Sigmoid colon (tissue), 7 donors: ENCODE measurements at regions of chr7 and their contacts with region 1.

Region 1: GRCh38 chr7:20075992-20076820 is 141.0 kb downstream of the MACC1 start:
- DNase-seq: no peak
- H3K4me3 ChIP-seq: no peak overlapping the region
- H3K27ac ChIP-seq: peak overlapping the region in 3 of 4 donors; percentile 45 to 60 (median 56)
- H3K4me1 ChIP-seq: peaks cover 0 to 39% (median 27%) of the 10 kb centered on the region in 4 donors
- H3K27me3 ChIP-seq: no peaks in the 10 kb centered on the region
- CTCF ChIP-seq: no peak
- EP300 ChIP-seq: no peak
- POLR2A ChIP-seq: no peak

Region 2: DNA sequence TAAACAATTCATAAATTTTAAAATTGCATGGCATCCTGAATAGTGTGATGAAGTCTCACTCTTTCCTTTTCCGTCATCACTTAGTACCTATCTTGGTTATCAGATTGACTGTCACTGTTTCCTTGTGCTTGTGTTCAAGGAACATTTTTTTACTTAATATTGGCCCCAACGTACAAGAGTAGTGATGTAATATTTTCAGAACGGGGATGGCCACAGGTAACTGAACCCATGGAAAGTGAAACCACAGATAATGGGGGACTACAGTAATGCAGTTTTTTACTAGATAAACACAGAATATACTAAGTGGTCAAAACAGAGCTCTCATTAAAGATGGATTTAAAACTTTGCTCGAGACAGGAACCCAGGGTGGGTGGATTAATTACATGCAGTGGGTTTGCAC is 55.6 kb after region 1 on chr7:
- intact Hi-C with region 1: no loop called
- DNase-seq: no peak
- H3K4me3 ChIP-seq: no peak overlapping the region
- H3K27ac ChIP-seq: no peak overlapping the region
- H3K4me1 ChIP-seq: peaks cover 0 to 16% (median 7%) of the 10 kb centered on the region in 4 donors
- H3K27me3 ChIP-seq: no peaks in the 10 kb centered on the region
- CTCF ChIP-seq: no peak
- EP300 ChIP-seq: no peak
- POLR2A ChIP-seq: no peak

Region 3: DNA sequence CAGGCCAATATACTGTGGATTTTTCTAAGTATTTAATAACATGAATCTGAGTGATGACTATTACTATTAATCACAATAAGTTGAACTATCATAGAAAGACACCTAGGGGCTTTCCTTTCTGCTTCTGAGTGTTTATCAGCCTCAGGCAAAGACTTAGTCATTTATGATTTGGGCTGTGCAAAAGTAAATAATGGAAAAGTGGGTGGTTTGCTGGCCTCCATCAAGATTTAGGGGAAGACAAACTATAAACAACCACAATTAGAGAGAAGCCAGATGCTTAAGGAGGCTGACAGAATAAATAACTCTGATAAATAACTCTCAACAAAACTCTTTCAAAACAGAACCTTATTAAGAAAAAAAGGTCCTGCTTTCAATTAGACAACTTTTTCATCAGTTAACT is 76.3 kb after region 1 on chr7:
- intact Hi-C with region 1: loop called (anchors 5 kb)
- DNase-seq: no peak
- H3K4me3 ChIP-seq: no peak overlapping the region
- H3K27ac ChIP-seq: peak overlapping the region in 3 of 4 donors; percentile 67 to 73 (median 72)
- H3K4me1 ChIP-seq: peaks cover 0 to 37% (median 34%) of the 10 kb centered on the region in 4 donors
- H3K27me3 ChIP-seq: no peaks in the 10 kb centered on the region
- CTCF ChIP-seq: no peak
- EP300 ChIP-seq: peak in 2 of 4 donors; percentile 5 to 33
- POLR2A ChIP-seq: no peak